ENCODE measurements at regions of chr22 and their contacts with region 1.

Region 1: DNA sequence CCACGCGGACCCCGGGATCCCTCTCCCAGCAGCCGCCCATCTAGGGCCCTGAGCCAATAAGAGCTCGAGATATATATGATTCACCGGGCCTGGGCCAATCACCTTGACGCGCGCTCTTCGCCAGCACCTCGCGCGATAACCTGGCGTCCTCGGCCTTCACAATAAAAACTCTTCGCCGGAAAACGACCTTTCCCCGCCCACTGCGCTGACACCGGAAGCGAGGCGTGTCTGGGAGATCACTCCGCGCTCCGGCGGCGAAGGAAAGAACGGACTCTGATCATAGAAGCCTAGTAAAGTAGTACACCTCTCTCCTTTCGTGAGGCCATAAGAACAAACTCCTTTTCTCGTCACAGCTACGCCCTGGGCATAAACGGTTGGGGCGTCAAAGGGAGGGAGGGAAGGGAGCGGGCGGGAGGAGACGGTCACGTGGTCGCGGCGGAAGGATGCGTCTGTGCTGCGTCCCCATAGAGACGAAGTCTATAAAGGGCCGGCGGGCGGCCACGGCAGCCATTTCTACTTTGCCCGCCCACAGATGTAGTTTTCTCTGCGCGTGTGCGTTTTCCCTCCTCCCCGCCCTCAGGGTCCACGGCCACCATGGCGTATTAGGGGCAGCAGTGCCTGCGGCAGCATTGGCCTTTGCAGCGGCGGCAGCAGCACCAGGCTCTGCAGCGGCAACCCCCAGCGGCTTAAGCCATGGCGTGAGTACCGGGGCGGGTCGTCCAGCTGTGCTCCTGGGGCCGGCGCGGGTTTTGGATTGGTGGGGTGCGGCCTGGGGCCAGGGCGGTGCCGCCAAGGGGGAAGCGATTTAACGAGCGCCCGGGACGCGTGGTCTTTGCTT is at the start of gene ATF4:
- DNase-seq: peak; percentile 98 to 99 (median 98)
- ATAC-seq: peak; percentile 82 to 92 (median 88)
- H3K4me3 ChIP-seq: peak within 1 kb of the TSS; percentile 71 to 100 (median 96)
- H3K27ac ChIP-seq: peak within 1 kb of the TSS; percentile 97 to 100 (median 100)
- H3K4me1 ChIP-seq: peaks cover 0 to 56% (median 50%) of the 10 kb centered on the region in 12 donors
- H3K27me3 ChIP-seq: no peaks in the 10 kb centered on the region
- CTCF ChIP-seq: no peak
- POLR2A ChIP-seq: peak; percentile 83 to 97
- total RNA-seq, gene ATF4: 117 to 322 (median 168) TPM

Region 2: GRCh38 chr22:39152511-39153219 is 367.6 kb before region 1 on chr22 and contains the start of gene CBX7:
- intact Hi-C with region 1: loop called in 1 of 10 experiments (anchors 5 kb)
- DNase-seq: peak; percentile 95 to 97 (median 96)
- ATAC-seq: peak; percentile 72 to 93 (median 92)
- H3K4me3 ChIP-seq: peak within 1 kb of the TSS; percentile 71 to 99 (median 92)
- H3K27ac ChIP-seq: peak within 1 kb of the TSS; percentile 82 to 99 (median 94)
- H3K4me1 ChIP-seq: peaks cover 0 to 54% (median 33%) of the 10 kb centered on the region in 12 donors
- H3K27me3 ChIP-seq: peaks cover 0 to 15% (median 0%) of the 10 kb centered on the region in 9 donors
- CTCF ChIP-seq: no peak
- POLR2A ChIP-seq: peak; percentile 80 to 95
- total RNA-seq, gene CBX7: 48.3 to 187 (median 75.0) TPM

Region 3: DNA sequence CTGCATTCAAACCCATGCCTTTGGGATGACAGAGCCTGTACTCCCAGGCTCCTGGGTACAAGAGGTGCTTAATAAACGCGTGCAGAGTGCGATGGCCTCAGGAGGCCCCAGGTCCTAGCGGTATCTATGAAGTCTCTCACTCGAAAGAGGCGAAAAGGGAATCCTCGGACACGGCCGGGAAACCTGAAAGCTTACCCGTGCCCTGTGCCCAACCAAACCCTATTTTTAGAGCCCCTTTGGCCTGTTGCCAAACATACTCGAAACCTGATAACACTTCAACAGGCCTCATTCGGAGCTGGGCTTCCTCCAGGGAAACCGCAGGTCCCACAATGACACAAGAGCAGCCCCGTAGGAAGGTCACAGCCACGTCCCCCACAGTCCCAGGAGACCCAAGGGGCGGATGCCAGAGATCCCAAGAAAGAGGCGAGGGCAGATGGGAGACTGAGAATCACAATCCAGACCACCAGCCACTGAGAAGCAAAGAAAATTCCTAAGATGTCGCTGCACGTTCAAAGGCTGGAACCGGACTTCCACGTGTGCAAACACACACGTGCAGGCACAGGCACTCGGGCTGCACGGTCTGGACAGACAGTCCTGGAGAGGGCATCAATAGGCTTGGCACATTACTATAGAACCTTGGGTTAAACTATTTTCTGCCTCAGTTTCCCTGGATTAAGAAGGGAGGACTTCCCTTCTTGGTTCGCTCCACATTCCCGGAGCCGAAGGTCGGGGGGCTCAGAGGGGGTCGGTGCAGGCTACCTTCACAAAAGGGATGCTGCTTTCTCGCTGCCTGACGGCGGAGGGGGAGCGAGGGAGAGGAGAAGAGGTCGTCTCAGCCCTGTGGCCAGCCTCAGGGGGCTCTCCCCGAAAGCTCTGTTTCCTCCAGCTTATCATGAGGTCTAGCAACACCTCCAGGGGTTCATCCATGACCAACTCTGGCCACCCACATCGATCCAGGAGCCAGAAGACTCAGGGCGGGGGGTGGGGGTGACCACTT is 283.7 kb before region 1 on chr22:
- intact Hi-C with region 1: loop called in 3 of 10 experiments (anchors 5 to 10 kb)
- DNase-seq: peak; percentile 79 to 91 (median 86)
- ATAC-seq: peak; percentile 23 to 56 (median 53)
- H3K4me3 ChIP-seq: peak overlapping the region in 8 of 12 donors; percentile 8 to 38 (median 19)
- H3K27ac ChIP-seq: peak overlapping the region; percentile 84 to 98 (median 94)
- H3K4me1 ChIP-seq: peaks cover 27 to 98% (median 90%) of the 10 kb centered on the region in 12 donors
- H3K27me3 ChIP-seq: peaks cover 0 to 60% (median 0%) of the 10 kb centered on the region in 9 donors
- CTCF ChIP-seq: no peak
- POLR2A ChIP-seq: no peak

Region 4: GRCh38 chr22:39343259-39344048 is 176.8 kb before region 1 on chr22:
- intact Hi-C with region 1: loop called in 6 of 10 experiments (anchors 5 to 10 kb)
- DNase-seq: peak in 4 of 5 donors; percentile 44 to 60 (median 58)
- ATAC-seq: peak in 3 of 4 donors; percentile 72 to 83 (median 80)
- H3K4me3 ChIP-seq: no peak overlapping the region
- H3K27ac ChIP-seq: no peak overlapping the region
- H3K4me1 ChIP-seq: peaks cover 0 to under 1% (median 0%) of the 10 kb centered on the region in 12 donors
- H3K27me3 ChIP-seq: peaks cover 0 to 3% (median 0%) of the 10 kb centered on the region in 9 donors
- CTCF ChIP-seq: peak; percentile 49 to 80 (median 64)
- POLR2A ChIP-seq: no peak

Region 5: DNA sequence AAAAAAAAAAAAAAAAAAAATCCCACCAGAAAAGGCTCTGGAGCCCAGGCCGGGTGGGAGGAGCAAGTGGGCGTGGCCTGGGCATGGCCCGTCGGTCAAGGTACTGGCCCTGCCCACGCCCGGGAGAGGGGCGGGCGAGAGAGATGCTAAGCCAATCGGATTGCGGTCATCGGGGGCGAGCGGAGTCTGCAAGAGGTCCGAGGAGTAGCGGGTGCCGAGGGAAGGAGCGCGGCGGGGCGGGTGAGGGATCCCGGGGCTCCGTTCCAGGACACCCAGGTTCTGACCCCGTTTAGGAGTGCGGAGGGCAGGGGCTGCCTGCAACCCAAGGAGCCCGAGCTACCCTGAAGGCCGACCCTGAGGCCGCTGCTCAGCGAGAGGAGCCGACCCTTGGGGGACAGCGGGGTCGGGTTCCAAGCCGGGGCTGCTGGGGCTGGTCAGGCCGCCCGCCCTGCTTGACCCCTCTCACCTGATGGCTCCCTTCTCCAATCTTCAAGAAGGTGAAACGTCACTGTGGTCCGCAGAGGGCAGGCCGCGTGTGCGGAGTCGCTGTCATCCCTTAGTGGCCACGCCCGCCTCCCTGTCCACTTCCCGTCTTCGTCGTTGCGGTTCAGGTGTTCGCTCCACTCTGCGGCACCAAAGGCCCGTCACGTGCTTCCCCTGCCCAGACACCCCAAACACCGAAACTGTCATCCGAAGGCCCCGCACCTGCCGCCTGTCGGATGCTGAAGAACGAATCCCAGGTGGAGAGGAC is 131.8 kb before region 1 on chr22:
- intact Hi-C with region 1: loop called in 1 of 10 experiments (anchors 10 kb)
- DNase-seq: peak; percentile 83 to 91 (median 89)
- ATAC-seq: peak; percentile 83 to 97 (median 94)
- H3K4me3 ChIP-seq: peak overlapping the region; percentile 33 to 73 (median 59)
- H3K27ac ChIP-seq: peak overlapping the region in 3 of 12 donors; percentile 10 to 40 (median 32)
- H3K4me1 ChIP-seq: peaks cover 0 to 16% (median 5%) of the 10 kb centered on the region in 12 donors
- H3K27me3 ChIP-seq: no peaks in the 10 kb centered on the region
- CTCF ChIP-seq: no peak
- POLR2A ChIP-seq: no peak

Region 6: GRCh38 chr22:39405346-39406085 is 114.8 kb before region 1 on chr22:
- intact Hi-C with region 1: loop called in 2 of 10 experiments (anchors 5 to 10 kb)
- DNase-seq: peak in 1 of 5 donors; percentile 26
- ATAC-seq: peak; percentile 34 to 64 (median 62)
- H3K4me3 ChIP-seq: peak overlapping the region in 5 of 12 donors; percentile 12 to 32 (median 22)
- H3K27ac ChIP-seq: peak overlapping the region in 5 of 12 donors; percentile 3 to 51 (median 28)
- H3K4me1 ChIP-seq: peaks cover 0 to 44% (median 20%) of the 10 kb centered on the region in 12 donors
- H3K27me3 ChIP-seq: no peaks in the 10 kb centered on the region
- CTCF ChIP-seq: peak in 1 of 12 donors; percentile 17
- POLR2A ChIP-seq: no peak

Region 7: GRCh38 chr22:39454385-39454871 is 65.8 kb before region 1 on chr22:
- intact Hi-C with region 1: no loop called
- DNase-seq: no peak
- ATAC-seq: no peak
- H3K4me3 ChIP-seq: no peak overlapping the region
- H3K27ac ChIP-seq: no peak overlapping the region
- H3K4me1 ChIP-seq: peaks cover 0 to 26% (median 6%) of the 10 kb centered on the region in 12 donors
- H3K27me3 ChIP-seq: peaks cover 0 to 25% (median 6%) of the 10 kb centered on the region in 9 donors
- CTCF ChIP-seq: no peak
- POLR2A ChIP-seq: no peak

Region 8: DNA sequence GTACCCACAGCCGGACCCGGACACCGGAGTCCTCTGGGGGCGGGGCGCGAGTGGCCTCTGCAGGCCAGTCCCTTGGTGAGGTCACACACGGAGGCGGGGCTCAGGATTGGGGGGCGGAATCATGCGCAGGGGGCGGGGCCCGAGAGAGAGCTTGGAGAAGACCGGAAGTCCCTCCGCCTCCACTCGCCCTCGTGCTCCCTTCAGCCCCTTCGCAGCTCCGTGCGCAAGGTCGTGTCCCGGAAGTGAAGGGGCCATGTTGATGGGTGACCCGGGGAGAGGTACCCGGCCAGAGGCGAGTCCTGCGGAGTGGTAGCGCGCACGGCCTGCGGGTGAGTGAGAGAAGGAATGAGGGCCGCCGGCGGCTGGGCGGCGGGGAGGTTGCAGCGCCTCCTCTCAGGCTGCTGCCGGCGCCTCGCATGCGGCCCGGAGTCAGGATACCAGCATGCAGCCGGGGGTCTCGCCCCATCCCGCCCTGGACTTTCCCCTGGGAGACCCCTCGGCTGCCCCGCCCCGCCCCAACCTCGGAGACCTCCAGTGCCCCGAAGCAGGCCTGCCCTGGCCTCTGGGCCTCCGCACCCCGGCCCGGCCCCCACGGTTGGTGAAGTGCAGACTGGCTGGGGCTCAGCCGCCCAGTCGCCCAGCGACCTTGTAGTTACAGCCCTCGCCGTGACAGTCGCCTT is 18.0 kb before region 1 on chr22 and contains the start of gene MIEF1:
- intact Hi-C with region 1: loop called in 5 of 10 experiments (anchors 1 to 2 kb)
- DNase-seq: peak; percentile 98 to 99 (median 98)
- ATAC-seq: peak; percentile 96 to 98 (median 97)
- H3K4me3 ChIP-seq: peak within 1 kb of the TSS; percentile 76 to 100 (median 96)
- H3K27ac ChIP-seq: peak within 1 kb of the TSS; percentile 63 to 96 (median 92)
- H3K4me1 ChIP-seq: peaks cover 14 to 68% (median 48%) of the 10 kb centered on the region in 12 donors
- H3K27me3 ChIP-seq: no peaks in the 10 kb centered on the region
- CTCF ChIP-seq: no peak
- POLR2A ChIP-seq: peak in 1 of 2 donors; percentile 41
- total RNA-seq, gene MIEF1: 15.4 to 25.2 (median 18.7) TPM